PC-3 (cell line): ENCODE measurements at regions of chr14 and their contacts with region 1.

Region 1: GRCh38 chr14:88667555-88668273 is 104.9 kb downstream of the ZC3H14 start:
- DNase-seq: peak; percentile 79
- ATAC-seq: peak; percentile 94
- H3K4me3 ChIP-seq: no peak overlapping the region
- H3K27ac ChIP-seq: no peak overlapping the region
- H3K4me1 ChIP-seq: peaks cover 5% of the 10 kb centered on the region; the same call in 1 of the 2 replicates
- H3K27me3 ChIP-seq: no peaks in the 10 kb centered on the region
- CTCF ChIP-seq: peak; percentile 95

Region 2: GRCh38 chr14:88746052-88746451 is 78.3 kb after region 1 on chr14:
- CTCF ChIA-PET with region 1: interaction called, 3 read pairs
- POLR2A ChIA-PET with region 1: no interaction called
- intact Hi-C with region 1: loop called (anchors 5 kb)
- DNase-seq: peak; percentile 28
- ATAC-seq: no peak
- H3K4me3 ChIP-seq: no peak overlapping the region
- H3K27ac ChIP-seq: no peak overlapping the region
- H3K4me1 ChIP-seq: peaks cover 25% of the 10 kb centered on the region
- H3K27me3 ChIP-seq: no peaks in the 10 kb centered on the region
- CTCF ChIP-seq: no peak

Region 3: GRCh38 chr14:88792572-88793258 is 125.0 kb after region 1 on chr14 and contains the start of gene EML5:
- CTCF ChIA-PET with region 1: interaction called, 4 read pairs
- POLR2A ChIA-PET with region 1: no interaction called
- intact Hi-C with region 1: loop called (anchors 2 kb)
- DNase-seq: peak; percentile 81
- ATAC-seq: peak; percentile 86
- H3K4me3 ChIP-seq: peak within 1 kb of the TSS; percentile 86
- H3K27ac ChIP-seq: no peak within 1 kb of the TSS
- H3K4me1 ChIP-seq: peaks cover 8% of the 10 kb centered on the region; the same call in 1 of the 2 replicates
- H3K27me3 ChIP-seq: 0 out of 2 replicates have a peak, but pooled peaks cover 4% of the 10 kb centered on the region
- CTCF ChIP-seq: no peak
- total RNA-seq, gene EML5: 0.66 and 0.86 TPM in 2 replicates

Region 4: DNA sequence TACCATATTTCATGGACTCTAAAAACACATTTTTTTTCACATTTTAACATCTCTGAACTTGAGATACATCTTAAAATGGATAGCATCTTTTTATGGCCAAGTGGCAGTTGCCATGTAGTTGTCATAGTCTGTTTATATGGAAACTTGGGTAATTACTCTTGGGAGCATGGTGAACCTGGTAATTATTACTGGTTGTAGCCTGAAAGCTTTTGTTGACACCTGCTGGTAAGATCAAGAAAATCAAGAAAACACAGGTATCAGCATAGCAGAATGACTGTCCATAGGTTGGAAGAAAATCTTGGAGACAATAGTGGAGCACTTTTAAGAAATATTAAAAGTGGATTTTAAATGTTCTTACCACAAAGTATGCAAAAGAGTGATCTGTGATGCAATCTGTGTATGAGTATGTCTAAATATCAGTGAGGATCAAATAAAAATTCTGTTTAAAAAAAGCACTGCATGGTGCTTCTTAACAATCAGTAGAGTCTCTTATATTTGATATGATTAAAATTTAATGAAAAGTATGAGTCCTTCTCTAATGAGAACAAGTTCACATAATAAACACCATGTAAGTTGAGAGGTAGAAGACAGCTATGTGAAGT is 200.9 kb after region 1 on chr14:
- CTCF ChIA-PET with region 1: interaction called, 4 read pairs
- POLR2A ChIA-PET with region 1: no interaction called
- intact Hi-C with region 1: loop called (anchors 1 kb)
- DNase-seq: peak; percentile 56
- ATAC-seq: peak; percentile 83
- H3K4me3 ChIP-seq: no peak overlapping the region
- H3K27ac ChIP-seq: no peak overlapping the region
- H3K4me1 ChIP-seq: no peaks in the 10 kb centered on the region
- H3K27me3 ChIP-seq: no peaks in the 10 kb centered on the region
- CTCF ChIP-seq: peak; percentile 67

Region 5: DNA sequence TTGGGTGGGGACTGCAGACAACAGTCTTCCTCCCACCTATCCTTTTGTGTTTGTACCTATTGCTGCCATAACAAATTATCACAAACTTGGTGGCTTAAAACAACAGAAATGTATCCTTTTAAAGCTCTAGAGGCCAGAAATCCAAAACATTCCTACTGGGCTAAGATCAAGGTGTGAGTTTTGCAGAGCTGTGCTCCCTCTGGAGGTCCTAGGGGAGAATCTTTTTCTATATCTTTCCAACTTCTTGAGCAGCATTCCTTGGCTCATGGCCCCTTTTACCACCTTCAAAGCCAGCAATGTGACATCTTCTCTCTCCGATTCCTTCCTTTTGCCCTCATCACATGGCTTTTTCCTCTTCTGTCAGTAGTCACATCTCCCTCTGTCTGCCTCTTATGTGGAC is 347.3 kb after region 1 on chr14:
- CTCF ChIA-PET with region 1: no interaction called
- POLR2A ChIA-PET with region 1: no interaction called
- intact Hi-C with region 1: loop called (anchors 5 kb)
- DNase-seq: peak; percentile 47
- ATAC-seq: peak; percentile 54
- H3K4me3 ChIP-seq: no peak overlapping the region
- H3K27ac ChIP-seq: no peak overlapping the region
- H3K4me1 ChIP-seq: peaks cover 3% of the 10 kb centered on the region; the same call in 1 of the 2 replicates
- H3K27me3 ChIP-seq: no peaks in the 10 kb centered on the region
- CTCF ChIP-seq: peak; percentile 60

Region 6: GRCh38 chr14:89146274-89146673 is 478.6 kb after region 1 on chr14:
- CTCF ChIA-PET with region 1: no interaction called
- POLR2A ChIA-PET with region 1: no interaction called
- intact Hi-C with region 1: no loop called
- DNase-seq: no peak
- ATAC-seq: no peak
- H3K4me3 ChIP-seq: no peak overlapping the region
- H3K27ac ChIP-seq: no peak overlapping the region
- H3K4me1 ChIP-seq: no peaks in the 10 kb centered on the region
- H3K27me3 ChIP-seq: peaks cover 7% of the 10 kb centered on the region; the same call in 1 of the 2 replicates
- CTCF ChIP-seq: no peak